ENCODE measurements at regions of chrX and their contacts with region 1.

Region 1: DNA sequence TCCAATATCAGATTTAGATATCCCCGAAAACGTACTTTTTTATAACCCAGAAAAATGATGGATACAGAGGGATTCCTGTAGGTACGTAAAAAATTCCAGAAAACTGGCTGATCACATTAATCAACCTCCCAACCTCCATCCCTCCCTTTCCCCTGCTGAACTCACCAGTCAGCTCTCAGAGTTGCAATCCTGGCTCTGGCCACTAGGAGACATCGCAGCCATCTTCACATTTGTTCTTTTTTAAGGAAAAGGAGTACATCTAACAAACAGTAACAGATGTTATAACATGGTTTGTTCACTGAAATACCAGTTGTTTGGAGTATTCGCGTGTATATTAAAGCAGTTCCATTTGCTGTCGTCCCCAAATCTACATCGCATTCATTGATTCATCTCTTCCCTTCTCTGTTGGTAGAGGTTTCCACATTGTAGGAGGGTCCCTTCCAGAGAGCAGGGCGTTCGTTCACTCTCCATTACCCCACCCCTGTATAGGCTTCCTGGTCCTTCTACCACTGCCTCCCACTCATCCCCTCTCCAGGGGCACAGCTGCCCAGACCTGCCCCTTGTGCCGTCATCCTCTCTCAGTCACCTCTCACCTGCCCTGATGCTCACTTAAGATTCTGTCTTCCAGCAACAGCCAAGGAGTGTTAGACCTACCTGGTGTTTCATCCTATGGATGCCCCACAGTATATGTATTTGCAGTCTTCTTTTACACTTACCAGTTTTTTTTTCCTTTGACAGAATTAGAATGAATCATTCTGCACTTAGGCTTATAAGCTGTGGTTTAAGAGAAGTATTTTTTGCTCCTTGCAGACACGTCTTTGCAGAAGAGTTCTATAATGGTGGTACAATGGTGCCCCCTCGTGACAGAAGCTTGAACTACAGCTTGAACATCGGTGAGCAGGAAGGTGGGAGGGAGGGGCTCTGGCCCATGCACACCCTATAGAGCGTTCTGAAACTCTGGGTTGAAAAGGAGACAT is 36.8 kb upstream of the RAB40AL start:
- DNase-seq: peak; percentile 76

Region 2: GRCh38 chrX:102837847-102838246 is 62.4 kb before region 1 on chrX:
- CTCF ChIA-PET with region 1: no interaction called
- POLR2A ChIA-PET with region 1: no interaction called
- DNase-seq: no peak

Region 3: DNA sequence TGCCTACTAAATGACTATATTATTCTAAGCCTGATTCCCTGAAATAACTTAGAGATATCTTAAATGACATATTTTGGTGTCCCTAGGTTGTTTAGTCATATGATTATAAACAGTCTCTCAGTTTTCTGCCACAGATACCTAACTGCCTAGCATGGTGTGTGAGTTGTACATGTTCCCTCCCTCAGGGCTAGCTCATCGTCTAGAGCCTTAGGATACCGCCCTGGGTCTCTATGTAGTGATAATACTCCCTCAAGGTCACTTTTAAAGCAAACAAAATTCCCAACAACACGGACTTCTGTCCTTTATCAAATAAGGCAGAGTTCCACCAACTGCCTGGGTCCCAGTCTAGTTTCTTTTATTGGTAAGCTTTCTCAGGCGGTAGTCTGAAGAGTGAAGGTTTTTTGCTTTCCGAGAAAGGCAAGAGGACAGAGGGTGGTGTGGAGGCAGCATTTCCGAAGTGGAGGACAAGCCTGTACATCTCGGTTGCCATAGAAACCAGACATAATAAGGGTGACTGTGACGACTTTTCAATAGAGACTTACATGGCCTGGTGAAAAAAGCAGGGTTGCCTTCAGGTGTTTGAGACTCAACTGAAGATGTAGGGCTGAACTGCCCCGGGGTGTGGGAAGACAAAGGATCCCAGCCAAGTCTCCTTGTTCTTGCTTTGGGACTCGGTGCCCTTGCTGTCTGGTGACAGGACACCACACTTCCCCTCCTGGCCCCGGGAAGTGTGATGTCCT is 16.9 kb before region 1 on chrX:
- CTCF ChIA-PET with region 1: interaction called, 23 read pairs
- POLR2A ChIA-PET with region 1: no interaction called
- DNase-seq: no peak

Region 4: GRCh38 chrX:102934624-102935023 is 34.4 kb after region 1 on chrX:
- CTCF ChIA-PET with region 1: interaction called, 11 read pairs
- POLR2A ChIA-PET with region 1: interaction called, 3 read pairs
- DNase-seq: peak; percentile 68

Measured in HEK293T (cell line).